H1 (cell line): ENCODE measurements at regions of chr3 and their contacts with region 1.

Region 1: DNA sequence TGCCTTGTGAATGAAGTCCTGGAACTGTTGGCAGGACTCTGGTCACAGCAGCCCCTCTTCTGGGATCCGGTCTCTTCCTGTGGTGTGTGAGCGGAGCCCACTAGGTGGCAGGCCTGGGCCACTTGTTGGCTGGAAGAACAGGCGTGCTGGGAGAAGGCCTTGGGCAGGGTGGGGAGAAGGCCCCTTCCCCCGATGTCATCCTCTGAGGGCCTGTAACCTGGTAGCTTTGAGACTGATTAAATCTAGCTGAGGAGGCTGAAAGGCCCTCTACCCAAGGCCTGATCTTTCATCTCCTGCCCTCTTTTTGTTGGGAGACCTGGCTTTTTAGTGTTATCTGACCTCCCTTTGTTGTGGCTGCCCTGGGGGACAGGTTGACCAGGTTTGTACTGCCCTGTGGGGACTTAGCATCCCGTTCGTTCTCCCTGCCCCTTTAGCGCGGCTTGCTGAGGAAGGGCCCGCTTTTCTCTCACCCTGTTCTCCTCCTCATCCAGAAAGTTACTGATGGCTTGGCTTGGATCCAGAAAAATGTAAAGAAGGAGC is 48.3 kb downstream of the CHCHD6 start:
- DNase-seq: peak; percentile 78 to 90
- H3K4me3 ChIP-seq: no peak overlapping the region
- H3K27ac ChIP-seq: no peak overlapping the region
- H3K4me1 ChIP-seq: peaks cover 14 to 18% (median 15%) of the 10 kb centered on the region in 4 experiments
- H3K27me3 ChIP-seq: no peaks in the 10 kb centered on the region
- CTCF ChIP-seq: peak; percentile 88 to 96 (median 93)
- EP300 ChIP-seq: peak in 1 of 2 experiments; percentile 26; a peak in 1 of 3 replicates
- POLR2A ChIP-seq: no peak
- RAD21 ChIP-seq: peak; percentile 99

Region 2: DNA sequence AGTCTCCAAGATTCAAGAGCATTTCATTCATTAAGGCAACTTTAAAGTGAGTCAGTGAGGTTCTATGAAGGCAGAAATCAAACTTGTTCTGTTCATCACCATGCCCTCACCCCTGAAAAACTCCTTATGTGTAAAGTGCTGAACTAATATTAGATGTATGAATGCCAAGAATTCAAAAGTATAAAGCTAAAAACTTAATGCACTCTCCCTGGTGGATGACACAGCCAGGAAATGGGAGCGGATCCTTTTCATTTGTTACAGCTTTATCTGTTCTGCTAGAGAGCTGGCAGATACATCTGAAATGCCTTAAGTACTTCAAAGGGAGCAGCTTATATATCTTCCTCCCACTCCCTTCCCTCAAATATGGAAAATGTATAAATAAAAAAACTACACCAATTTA is 105.7 kb before region 1 on chr3:
- CTCF ChIA-PET with region 1: no interaction called
- POLR2A ChIA-PET with region 1: no interaction called
- DNase-seq: no peak
- H3K4me3 ChIP-seq: no peak overlapping the region
- H3K27ac ChIP-seq: no peak overlapping the region
- H3K4me1 ChIP-seq: no peaks in the 10 kb centered on the region
- H3K27me3 ChIP-seq: no peaks in the 10 kb centered on the region
- CTCF ChIP-seq: no peak
- EP300 ChIP-seq: no peak
- POLR2A ChIP-seq: no peak
- RAD21 ChIP-seq: no peak

Region 3: DNA sequence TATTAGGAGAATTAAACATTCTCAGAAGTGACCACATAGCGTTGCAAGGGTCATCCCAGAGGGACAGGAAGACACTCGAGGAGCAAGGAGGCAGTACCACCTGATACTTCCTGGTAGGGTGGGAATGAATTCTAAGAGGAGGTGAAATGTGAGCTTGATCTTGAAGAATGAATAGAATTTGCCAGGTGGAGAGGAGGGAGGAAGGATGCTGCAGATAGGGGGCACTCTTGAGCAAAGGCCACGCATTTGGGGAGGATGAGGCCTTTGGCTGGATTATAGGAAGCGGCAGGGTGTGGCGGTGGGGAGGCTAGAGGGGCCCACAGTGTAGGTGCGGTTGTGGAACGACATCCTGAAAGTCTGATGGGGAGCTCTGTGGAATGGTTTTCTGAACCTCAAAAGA is 14.8 kb before region 1 on chr3:
- CTCF ChIA-PET with region 1: interaction called, 42 read pairs
- POLR2A ChIA-PET with region 1: interaction called, 3 read pairs
- DNase-seq: peak in 1 of 2 experiments; percentile 66
- H3K4me3 ChIP-seq: no peak overlapping the region
- H3K27ac ChIP-seq: no peak overlapping the region
- H3K4me1 ChIP-seq: no peaks in the 10 kb centered on the region
- H3K27me3 ChIP-seq: no peaks in the 10 kb centered on the region; a peak in 1 of 7 replicates
- CTCF ChIP-seq: peak; percentile 56 to 76 (median 62)
- EP300 ChIP-seq: no peak
- POLR2A ChIP-seq: no peak
- RAD21 ChIP-seq: peak; percentile 20 to 48; a peak in 3 of 4 replicates

Region 4: GRCh38 chr3:126777366-126777765 is 25.0 kb after region 1 on chr3:
- CTCF ChIA-PET with region 1: interaction called, 13 read pairs
- POLR2A ChIA-PET with region 1: no interaction called
- DNase-seq: no peak
- H3K4me3 ChIP-seq: no peak overlapping the region
- H3K27ac ChIP-seq: no peak overlapping the region
- H3K4me1 ChIP-seq: peaks cover 1 to 5% (median 4%) of the 10 kb centered on the region in 4 experiments; a peak in 6 of 7 replicates
- H3K27me3 ChIP-seq: no peaks in the 10 kb centered on the region
- CTCF ChIP-seq: no peak
- EP300 ChIP-seq: no peak
- POLR2A ChIP-seq: no peak
- RAD21 ChIP-seq: no peak

Region 5: GRCh38 chr3:126939338-126939718 is 187.0 kb after region 1 on chr3:
- CTCF ChIA-PET with region 1: interaction called, 23 read pairs
- POLR2A ChIA-PET with region 1: no interaction called
- DNase-seq: no peak
- H3K4me3 ChIP-seq: no peak overlapping the region
- H3K27ac ChIP-seq: no peak overlapping the region
- H3K4me1 ChIP-seq: no peaks in the 10 kb centered on the region
- H3K27me3 ChIP-seq: no peaks in the 10 kb centered on the region
- CTCF ChIP-seq: peak; percentile 26 to 50 (median 49)
- EP300 ChIP-seq: no peak
- POLR2A ChIP-seq: no peak
- RAD21 ChIP-seq: peak in 1 of 2 experiments; percentile 43; a peak in 2 of 4 replicates

Region 6: DNA sequence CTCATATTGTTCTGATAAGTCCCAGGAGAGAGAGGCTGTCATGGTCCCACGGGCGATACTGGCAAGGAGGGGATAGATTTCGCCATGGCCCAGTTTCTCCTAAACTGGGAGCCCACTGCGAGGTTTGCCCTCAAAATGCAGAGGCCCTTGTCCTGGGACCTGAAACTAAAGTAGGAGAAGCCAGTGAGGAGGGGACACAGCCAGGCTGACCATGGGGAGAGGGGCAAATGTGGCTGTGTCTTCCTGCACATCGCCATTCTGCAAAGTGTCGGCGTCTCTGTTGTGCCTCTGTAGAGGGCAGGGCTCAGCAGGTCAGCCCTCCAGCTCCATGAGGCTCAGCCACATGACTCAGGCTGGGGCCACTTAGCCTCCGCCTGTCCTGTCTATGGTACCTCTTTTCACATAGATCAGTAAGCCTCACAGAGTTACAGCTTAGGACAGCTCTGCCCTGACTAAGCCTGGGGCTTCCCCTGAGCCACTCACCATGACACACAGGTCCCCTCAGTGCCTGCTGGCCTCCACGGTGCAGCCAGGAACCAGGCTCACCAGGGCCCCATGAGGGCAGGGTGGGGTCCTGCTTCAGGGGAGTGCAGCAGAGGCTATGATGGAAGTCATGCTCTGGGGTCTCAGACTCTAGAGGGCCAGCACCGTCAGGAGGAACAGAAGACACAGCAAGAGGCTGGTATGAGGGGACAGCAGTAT is 201.9 kb after region 1 on chr3:
- CTCF ChIA-PET with region 1: interaction called, 13 read pairs
- POLR2A ChIA-PET with region 1: no interaction called
- DNase-seq: no peak
- H3K4me3 ChIP-seq: no peak overlapping the region
- H3K27ac ChIP-seq: no peak overlapping the region
- H3K4me1 ChIP-seq: no peaks in the 10 kb centered on the region; a peak in 1 of 7 replicates
- H3K27me3 ChIP-seq: no peaks in the 10 kb centered on the region
- CTCF ChIP-seq: no peak
- EP300 ChIP-seq: no peak
- POLR2A ChIP-seq: no peak
- RAD21 ChIP-seq: no peak

Region 7: GRCh38 chr3:126971891-126972351 is 219.5 kb after region 1 on chr3:
- CTCF ChIA-PET with region 1: interaction called, 58 read pairs
- POLR2A ChIA-PET with region 1: no interaction called
- DNase-seq: no peak
- H3K4me3 ChIP-seq: no peak overlapping the region
- H3K27ac ChIP-seq: no peak overlapping the region
- H3K4me1 ChIP-seq: peaks cover 2 to 10% (median 5%) of the 10 kb centered on the region in 4 experiments; a peak in 4 of 7 replicates
- H3K27me3 ChIP-seq: no peaks in the 10 kb centered on the region
- CTCF ChIP-seq: no peak
- EP300 ChIP-seq: no peak
- POLR2A ChIP-seq: no peak
- RAD21 ChIP-seq: no peak